Astrocyte of the cerebellum (primary cell): ENCODE measurements at regions of chr15 and their contacts with region 1.

Region 1: DNA sequence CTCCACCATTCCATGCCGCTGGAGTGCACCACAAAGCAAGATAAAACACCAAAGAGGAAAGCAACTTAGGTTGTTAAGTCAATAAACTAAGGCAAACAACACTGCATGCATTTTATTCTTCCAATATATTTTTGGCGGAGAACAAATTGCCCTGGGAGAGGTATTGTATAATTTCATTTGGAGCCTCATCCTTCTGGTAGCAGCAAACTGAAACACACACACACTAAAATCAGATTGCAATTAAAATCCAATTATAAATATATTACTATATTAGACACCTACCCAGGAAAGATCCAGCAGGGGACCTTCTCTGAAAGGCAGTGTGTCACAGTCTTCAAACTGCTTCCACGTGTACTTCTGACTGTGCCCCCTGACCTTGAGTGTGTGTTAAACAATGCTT is 102.3 kb downstream of the RORA start:
- DNase-seq: no peak
- H3K4me3 ChIP-seq: no peak overlapping the region
- CTCF ChIP-seq: no peak

Region 2: DNA sequence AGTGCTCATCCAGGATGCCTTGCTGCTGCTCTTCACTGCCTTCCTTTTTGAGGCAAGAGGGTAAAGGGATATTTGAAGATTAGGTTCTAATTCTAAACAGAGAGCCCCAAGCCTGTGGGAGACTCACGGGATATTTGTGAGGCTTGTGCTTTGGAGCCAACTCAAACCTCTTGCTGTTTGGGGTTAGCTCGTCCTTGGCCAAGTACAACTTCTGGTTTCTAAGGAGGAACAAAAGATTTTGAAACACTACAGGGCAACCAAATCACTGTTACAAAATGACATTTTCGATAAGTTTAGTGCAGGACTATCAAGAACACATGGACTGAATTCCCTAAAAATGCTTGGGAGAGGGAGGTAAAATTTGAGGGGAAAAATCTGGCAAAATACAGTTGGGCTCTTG is 87.9 kb before region 1 on chr15:
- in situ Hi-C with region 1: no loop called
- DNase-seq: peak; percentile 63
- H3K4me3 ChIP-seq: no peak overlapping the region
- CTCF ChIP-seq: no peak

Region 3: DNA sequence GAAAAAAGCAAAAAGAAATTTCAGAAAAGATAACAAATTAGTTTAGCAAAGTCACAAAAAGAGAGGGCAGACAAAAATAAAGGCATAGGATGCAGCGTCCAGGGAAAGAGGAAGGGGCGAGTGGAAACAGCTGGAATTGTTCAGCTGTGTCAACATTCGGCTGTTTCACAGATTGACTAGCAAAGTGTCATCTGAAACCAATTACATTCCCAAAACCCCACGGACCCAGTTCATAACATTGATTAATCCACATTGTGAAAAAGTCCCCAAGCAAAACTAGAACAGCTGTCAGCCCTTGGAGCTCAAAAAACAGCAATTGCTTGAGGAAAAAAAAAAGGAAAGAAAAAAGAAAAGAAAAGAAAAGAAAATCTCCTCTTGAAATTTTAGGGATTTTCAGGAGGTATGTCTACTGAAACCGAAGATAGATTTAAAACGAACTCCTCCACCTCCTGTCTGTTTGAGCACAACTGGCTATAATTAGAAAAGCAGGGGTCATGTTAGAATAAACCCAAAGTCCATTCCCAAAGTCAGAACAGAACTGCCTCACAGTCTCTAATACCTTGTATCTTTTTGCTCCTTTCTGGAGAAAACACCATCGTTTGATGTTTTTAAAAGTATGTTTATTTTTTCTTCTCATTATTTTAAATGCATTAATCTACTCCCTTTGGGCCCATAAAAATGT is 57.3 kb before region 1 on chr15:
- in situ Hi-C with region 1: no loop called
- DNase-seq: no peak
- H3K4me3 ChIP-seq: no peak overlapping the region
- CTCF ChIP-seq: no peak

Region 4: GRCh38 chr15:61084944-61085367 is 41.9 kb before region 1 on chr15:
- in situ Hi-C with region 1: loop called (anchors 5 kb)
- DNase-seq: no peak
- H3K4me3 ChIP-seq: no peak overlapping the region
- CTCF ChIP-seq: no peak

Region 5: DNA sequence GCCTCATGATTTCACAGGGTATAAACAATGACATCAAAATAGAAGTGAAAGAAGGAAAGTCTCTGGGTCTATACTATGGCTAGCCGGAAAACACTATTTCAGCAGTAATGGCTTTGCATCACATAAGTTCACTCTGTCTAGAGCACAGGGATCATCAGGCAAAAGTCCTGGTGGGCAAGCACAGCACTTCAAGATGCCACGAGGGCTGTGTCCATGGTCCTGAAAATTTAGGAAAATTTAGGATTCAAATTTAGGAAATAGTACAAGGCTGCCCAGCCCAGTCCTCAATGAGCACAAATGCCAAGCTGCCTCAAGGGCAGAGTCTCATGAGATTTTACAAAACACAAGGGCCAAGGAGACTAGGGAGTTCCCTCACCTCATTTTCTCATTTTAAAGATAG is 48.2 kb after region 1 on chr15:
- in situ Hi-C with region 1: no loop called
- DNase-seq: no peak
- H3K4me3 ChIP-seq: no peak overlapping the region
- CTCF ChIP-seq: no peak

Region 6: GRCh38 chr15:61216519-61216918 is 89.7 kb after region 1 on chr15:
- in situ Hi-C with region 1: no loop called
- DNase-seq: no peak
- H3K4me3 ChIP-seq: no peak overlapping the region
- CTCF ChIP-seq: no peak